Dorsolateral prefrontal cortex (tissue), 120 donors: ENCODE measurements at regions of chr13 and their contacts with region 1.

Region 1: DNA sequence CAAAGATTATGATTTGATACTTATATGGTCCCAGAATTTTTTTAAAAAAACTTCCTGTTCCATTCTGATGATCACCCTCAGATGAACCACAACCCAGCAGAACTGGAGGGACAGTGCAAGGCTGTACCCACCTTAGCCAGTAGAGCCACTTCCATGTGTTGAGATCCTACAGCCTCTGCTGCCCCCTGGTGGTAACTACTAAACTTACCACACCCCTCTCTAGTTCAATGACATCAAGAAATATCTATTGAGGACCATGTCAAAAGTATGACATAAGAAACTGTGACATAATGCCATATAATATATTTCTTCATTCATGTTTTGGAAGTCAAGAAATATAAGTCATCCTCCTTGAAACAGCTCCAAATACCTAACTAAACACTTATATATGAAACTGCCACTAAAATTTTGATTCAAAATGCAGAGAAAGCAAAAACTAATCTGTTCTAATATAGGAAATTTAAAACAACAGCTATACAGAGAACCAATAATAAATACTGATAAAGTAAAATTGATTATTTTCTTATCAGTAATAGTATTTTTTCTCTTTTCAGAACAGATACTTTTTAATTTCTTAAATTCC is 412.6 kb downstream of the KCTD12 start:
- DNase-seq: peak in 9 of 10 donors; percentile 38 to 88 (median 72)
- H3K4me3 ChIP-seq: no peak overlapping the region
- H3K27ac ChIP-seq: no peak overlapping the region
- H3K27me3 ChIP-seq: no peaks in the 10 kb centered on the region
- CTCF ChIP-seq: peak; percentile 83 to 99 (median 94)

Region 2: GRCh38 chr13:75696746-75697145 is 776.9 kb before region 1 on chr13:
- intact Hi-C with region 1: loop called in 1 of 2 experiments (anchors 2 kb)
- DNase-seq: no peak
- H3K4me3 ChIP-seq: no peak overlapping the region
- H3K27ac ChIP-seq: no peak overlapping the region
- H3K27me3 ChIP-seq: no peaks in the 10 kb centered on the region
- CTCF ChIP-seq: no peak

Region 3: DNA sequence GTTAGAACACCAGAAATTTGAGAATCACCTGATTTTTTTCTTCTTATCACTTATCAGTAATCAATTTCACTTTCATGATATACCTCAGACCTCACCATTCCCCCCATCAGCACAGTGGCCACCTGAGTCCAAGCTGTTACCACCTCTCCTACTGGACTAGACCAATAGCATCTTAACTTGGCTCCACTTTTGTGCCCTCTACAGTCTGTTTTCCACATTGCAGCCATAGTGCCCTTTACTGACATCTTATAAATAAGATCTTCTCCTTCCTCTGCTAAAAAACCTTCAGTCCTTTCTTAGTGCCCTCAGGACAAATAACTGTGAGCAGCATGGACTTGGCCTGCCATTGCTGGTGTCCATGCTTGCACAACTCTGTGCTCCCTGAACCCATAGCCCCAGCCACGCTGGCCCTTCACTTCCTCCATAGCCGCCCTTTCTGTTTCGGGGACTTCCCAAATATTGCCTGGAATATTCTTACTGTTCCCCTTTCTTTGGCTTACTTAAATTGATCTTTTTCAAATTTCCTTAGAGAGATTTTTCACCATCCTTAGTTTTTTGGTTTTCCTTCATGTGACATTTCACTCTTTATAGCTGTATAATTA is 456.7 kb before region 1 on chr13:
- intact Hi-C with region 1: loop called in 1 of 2 experiments (anchors 5 kb)
- DNase-seq: no peak
- H3K4me3 ChIP-seq: no peak overlapping the region
- H3K27ac ChIP-seq: no peak overlapping the region
- H3K27me3 ChIP-seq: no peaks in the 10 kb centered on the region
- CTCF ChIP-seq: peak in 38 of 56 donors; percentile 5 to 49 (median 33)

Region 4: DNA sequence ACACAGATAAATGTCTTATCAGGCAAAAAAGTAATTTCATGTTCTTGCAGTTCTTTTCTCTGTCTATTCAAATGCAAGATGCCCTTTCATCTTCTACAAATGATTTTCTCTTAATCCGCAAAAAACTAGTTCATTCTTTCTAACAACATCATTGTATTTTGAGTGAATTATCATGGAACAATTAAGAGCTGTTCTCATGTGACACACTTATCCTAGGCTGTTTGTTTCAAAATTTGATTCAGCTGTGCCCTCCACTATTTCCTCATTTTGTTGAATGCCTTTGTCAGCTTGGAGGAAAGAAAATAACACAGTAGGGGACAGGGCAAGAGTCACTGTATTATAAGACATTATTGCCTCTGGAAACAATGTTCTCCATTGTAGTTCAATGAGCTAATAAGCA is 15.6 kb after region 1 on chr13:
- intact Hi-C with region 1: no loop called
- DNase-seq: no peak
- H3K4me3 ChIP-seq: no peak overlapping the region
- H3K27ac ChIP-seq: no peak overlapping the region
- H3K27me3 ChIP-seq: peaks cover 0 to 5% (median 0%) of the 10 kb centered on the region in 45 donors
- CTCF ChIP-seq: no peak

Region 5: DNA sequence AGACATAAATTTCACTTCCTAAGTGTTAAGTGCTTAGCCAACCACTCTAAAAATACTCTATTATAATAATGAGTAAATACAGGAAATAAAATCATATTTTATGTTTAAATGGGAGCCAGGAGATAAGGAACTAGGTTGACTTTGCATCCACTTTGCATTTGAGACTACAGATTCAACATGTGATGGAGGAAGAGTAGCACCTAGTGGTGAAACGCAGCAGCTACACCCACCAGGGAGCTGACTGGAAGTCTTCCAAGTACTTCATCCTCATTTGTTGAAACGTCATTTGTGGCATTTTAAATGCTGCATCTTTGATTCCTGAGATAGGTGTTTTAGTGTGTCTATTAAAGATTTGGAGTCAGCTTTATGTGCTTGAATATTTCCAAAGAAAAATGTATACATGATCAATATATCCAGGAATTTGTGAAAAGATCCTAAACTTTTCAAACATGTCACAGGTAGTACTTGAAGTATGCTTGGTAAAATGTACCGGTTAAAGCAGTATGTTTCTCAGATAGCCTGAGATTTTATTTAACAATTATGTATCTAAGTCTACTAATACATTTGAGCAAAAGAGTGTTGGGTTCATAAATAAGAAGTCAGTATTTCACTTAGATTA is 430.0 kb after region 1 on chr13:
- intact Hi-C with region 1: loop called in 1 of 2 experiments (anchors 5 kb)
- DNase-seq: peak in 7 of 10 donors; percentile 52 to 77 (median 59)
- H3K4me3 ChIP-seq: no peak overlapping the region
- H3K27ac ChIP-seq: no peak overlapping the region
- H3K27me3 ChIP-seq: peaks cover 0 to 4% (median 0%) of the 10 kb centered on the region in 45 donors
- CTCF ChIP-seq: peak; percentile 90 to 100 (median 97)

Region 6: GRCh38 chr13:76976490-76976889 is 502.8 kb after region 1 on chr13:
- intact Hi-C with region 1: no loop called
- DNase-seq: peak in 1 of 10 donors; percentile 86
- H3K4me3 ChIP-seq: no peak overlapping the region
- H3K27ac ChIP-seq: peak overlapping the region in 1 of 59 donors; percentile 86
- H3K27me3 ChIP-seq: peaks cover 0 to 5% (median 0%) of the 10 kb centered on the region in 45 donors
- CTCF ChIP-seq: no peak